GM10248 (cell line): ENCODE measurements at regions of chr1 and their contacts with region 1.

Region 1: DNA sequence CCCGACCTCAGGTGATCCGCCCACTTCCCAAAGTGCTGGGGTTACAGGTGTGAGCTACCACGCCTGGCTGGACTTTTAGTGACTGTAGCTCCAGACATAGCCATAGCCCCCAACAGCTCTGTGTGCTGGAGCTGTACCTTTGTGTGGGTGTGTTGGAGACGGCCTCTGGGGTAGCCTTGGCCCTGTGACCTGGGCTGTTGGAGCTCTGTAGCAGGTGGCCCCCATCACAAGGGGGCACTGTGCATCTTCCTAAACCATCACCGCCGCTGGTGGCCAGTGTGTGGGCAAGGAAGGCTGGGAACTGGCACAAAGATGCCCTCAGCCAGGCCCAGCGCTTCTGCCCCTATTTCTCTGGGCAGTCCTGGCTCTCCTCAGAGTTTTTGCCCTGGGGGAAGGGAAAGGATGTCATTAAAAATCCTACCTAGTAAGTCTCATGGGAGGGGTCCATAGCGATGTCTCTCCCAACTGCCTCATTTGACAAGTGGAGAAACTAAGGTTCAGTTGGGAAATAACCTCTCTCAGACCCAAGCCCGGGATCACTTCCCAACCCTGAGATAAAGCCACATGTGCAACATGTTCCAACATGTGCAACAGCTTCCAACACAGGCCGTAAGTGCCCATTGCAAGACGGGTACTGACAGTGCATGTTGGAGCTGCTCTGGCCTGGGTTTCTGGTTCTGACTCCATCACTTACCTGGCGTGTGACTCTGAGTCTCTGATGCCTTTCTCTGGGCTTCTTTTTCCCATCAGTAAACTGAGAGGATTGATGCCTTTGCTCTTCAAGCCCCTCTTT is 38.2 kb upstream of the FOXO6 start:
- DNase-seq: peak; percentile 75
- CTCF ChIP-seq: peak; percentile 64

Region 2: DNA sequence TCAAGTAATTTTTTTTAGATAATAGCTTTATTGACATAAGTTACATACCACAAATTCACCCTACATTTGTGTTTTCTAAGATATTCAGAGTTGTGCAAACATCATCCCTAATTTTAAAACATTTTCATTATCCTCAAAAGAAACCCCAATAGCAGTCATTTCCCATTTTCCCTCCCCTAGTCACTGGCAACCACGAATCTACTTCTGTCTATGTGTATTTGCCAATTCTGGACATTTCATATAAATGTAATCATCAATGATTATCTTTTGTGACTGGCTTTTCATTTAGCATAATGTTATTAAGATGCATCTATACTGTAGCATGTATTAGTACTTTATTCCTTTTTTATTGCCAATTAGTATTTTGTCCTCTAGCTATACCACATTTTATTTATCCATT is 212.7 kb before region 1 on chr1:
- CTCF ChIA-PET with region 1: no interaction called
- POLR2A ChIA-PET with region 1: no interaction called
- DNase-seq: no peak
- CTCF ChIP-seq: no peak

Region 3: GRCh38 chr1:41423511-41424221 is 100.6 kb after region 1 on chr1:
- CTCF ChIA-PET with region 1: interaction called, 144 read pairs
- POLR2A ChIA-PET with region 1: no interaction called
- DNase-seq: no peak
- CTCF ChIP-seq: peak; percentile 37